Naive thymus-derived CD4-positive, alpha-beta T cell (primary cell): ENCODE measurements at regions of chr3 and their contacts with region 1.

Region 1: GRCh38 chr3:46065294-46065721 is 38.0 kb upstream of the XCR1 start:
- DNase-seq: peak; percentile 25 to 94 (median 80)
- ATAC-seq: peak; percentile 94
- H3K4me3 ChIP-seq: no peak overlapping the region
- H3K4me3 Mint-ChIP-seq: peak overlapping the region; percentile 62 to 88 (median 75)
- H3K27ac ChIP-seq: peak overlapping the region; percentile 56
- H3K27ac Mint-ChIP-seq: peak overlapping the region; percentile 33 to 90 (median 81)
- H3K4me1 ChIP-seq: peaks cover 51 to 62% of the 10 kb centered on the region in 2 donors
- H3K4me1 Mint-ChIP-seq: peaks cover 48 to 82% (median 72%) of the 10 kb centered on the region in 7 donors
- H3K27me3 ChIP-seq: no peaks in the 10 kb centered on the region
- H3K27me3 Mint-ChIP-seq: peaks cover 0 to 68% (median 0%) of the 10 kb centered on the region in 5 donors

Region 2: DNA sequence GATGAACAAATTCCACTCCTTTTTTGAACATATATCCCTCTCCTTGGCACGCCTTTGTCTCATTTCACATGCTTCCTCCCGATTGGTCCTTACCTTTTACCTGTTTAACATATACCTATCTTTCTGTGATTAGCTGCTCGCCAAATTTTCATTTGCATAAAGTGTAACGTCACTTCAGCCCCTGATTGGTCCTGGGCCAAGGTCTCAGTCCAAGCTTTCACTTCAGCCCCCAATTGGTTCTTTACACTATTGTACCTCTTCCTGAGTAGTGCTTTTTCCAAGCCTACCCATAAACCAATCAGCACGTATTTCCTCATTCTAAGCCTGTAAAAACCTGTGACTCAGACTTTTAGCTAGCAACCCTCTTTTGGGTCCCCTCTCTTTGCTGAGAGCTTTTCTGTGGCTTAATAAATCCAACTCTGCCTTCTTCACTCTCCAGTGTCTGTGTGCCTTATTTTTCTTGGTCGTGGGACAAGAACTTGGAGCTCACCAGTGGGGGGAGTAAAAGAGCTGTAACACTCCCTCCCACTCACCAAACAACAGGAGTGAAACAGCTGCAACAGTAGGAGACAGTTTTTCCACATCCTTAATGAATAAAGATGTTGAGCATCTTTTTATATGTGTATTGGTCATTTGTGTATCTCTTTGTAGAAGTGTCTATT is 37.4 kb before region 1 on chr3:
- CTCF ChIA-PET with region 1: no interaction called
- POLR2A ChIA-PET with region 1: no interaction called
- intact Hi-C with region 1: loop called in 1 of 2 experiments (anchors 5 kb)
- DNase-seq: no peak
- ATAC-seq: no peak
- H3K4me3 ChIP-seq: no peak overlapping the region
- H3K4me3 Mint-ChIP-seq: no peak overlapping the region
- H3K27ac ChIP-seq: no peak overlapping the region
- H3K27ac Mint-ChIP-seq: no peak overlapping the region
- H3K4me1 ChIP-seq: no peaks in the 10 kb centered on the region
- H3K4me1 Mint-ChIP-seq: peaks cover 0 to 5% (median 0%) of the 10 kb centered on the region in 7 donors
- H3K27me3 ChIP-seq: no peaks in the 10 kb centered on the region
- H3K27me3 Mint-ChIP-seq: peaks cover 0 to 10% (median 0%) of the 10 kb centered on the region in 5 donors

Region 3: GRCh38 chr3:46049116-46049515 is 16.2 kb before region 1 on chr3:
- CTCF ChIA-PET with region 1: interaction called, 5 read pairs
- POLR2A ChIA-PET with region 1: interaction called, 4 read pairs
- intact Hi-C with region 1: loop called in 1 of 2 experiments (anchors 1 kb)
- DNase-seq: no peak
- ATAC-seq: no peak
- H3K4me3 ChIP-seq: no peak overlapping the region
- H3K4me3 Mint-ChIP-seq: no peak overlapping the region
- H3K27ac ChIP-seq: no peak overlapping the region
- H3K27ac Mint-ChIP-seq: peak overlapping the region in 2 of 9 donors; percentile 14 to 36
- H3K4me1 ChIP-seq: peaks cover 13 to 19% of the 10 kb centered on the region in 2 donors
- H3K4me1 Mint-ChIP-seq: peaks cover 21 to 44% (median 33%) of the 10 kb centered on the region in 7 donors
- H3K27me3 ChIP-seq: no peaks in the 10 kb centered on the region
- H3K27me3 Mint-ChIP-seq: peaks cover 0 to 49% (median 6%) of the 10 kb centered on the region in 5 donors